ENCODE measurements at regions of chr3 and their contacts with region 1.

Region 1: DNA sequence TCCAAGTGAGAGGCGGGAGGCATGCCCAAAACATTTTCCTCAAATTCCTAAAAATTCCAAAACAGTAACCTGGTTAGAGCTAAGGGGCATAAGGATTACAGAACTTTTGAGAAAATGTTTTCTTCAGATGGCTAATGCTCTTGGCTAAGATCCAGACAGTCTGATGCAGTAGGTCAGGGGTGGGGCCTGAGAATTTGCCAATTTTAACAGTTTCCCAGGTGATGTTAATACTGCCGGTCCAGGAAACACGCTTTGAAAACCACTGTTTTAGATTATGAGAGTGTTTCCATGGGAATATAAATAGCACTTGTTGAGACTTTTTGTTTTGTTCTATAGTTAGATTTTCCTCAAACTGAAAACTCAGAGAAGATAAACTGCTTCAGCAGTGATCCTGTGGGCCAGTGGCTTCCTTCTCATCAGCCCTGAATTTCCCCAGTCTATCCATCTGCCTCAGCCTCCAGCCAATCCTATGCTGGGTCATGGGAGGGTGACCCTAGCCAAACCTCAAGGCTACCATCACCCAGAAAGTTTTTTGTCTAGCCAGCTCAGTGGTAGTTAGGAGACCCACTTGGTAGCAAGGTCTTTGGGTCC is 71.6 kb upstream of the ACP3 start:
- DNase-seq: peak; percentile 24
- ATAC-seq: no peak; the same call in 1 of the 2 replicates
- H3K4me3 ChIP-seq: no peak overlapping the region
- H3K27ac ChIP-seq: no peak overlapping the region
- H3K4me1 ChIP-seq: peaks cover 6% of the 10 kb centered on the region; the same call in 1 of the 2 replicates
- H3K27me3 ChIP-seq: no peaks in the 10 kb centered on the region
- CTCF ChIP-seq: no peak

Region 2: GRCh38 chr3:132154609-132155008 is 91.0 kb before region 1 on chr3:
- CTCF ChIA-PET with region 1: no interaction called
- POLR2A ChIA-PET with region 1: no interaction called
- intact Hi-C with region 1: no loop called
- DNase-seq: no peak
- ATAC-seq: no peak
- H3K4me3 ChIP-seq: no peak overlapping the region
- H3K27ac ChIP-seq: no peak overlapping the region
- H3K4me1 ChIP-seq: no peaks in the 10 kb centered on the region
- H3K27me3 ChIP-seq: no peaks in the 10 kb centered on the region
- CTCF ChIP-seq: no peak

Region 3: DNA sequence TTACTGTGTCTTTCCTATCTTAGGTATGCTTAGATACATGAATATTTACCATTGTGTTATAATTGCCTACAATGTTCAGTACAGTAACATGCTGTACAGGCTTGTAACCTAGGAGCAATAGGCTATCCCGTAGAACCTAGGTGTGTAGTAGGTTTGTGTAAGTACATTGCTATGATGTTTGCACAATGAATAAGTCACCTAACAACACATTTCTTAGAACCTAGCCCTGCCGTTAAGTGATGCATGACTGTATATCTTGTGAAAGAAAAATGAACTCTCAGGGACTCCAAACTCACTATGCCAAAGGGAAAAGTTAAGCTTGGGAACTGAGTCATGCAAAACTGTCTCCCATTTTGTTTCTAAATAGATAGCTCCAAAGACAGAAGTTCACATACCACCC is 20.0 kb before region 1 on chr3:
- CTCF ChIA-PET with region 1: no interaction called
- POLR2A ChIA-PET with region 1: no interaction called
- intact Hi-C with region 1: loop called (anchors 2 kb)
- DNase-seq: peak; percentile 89
- ATAC-seq: peak; percentile 99
- H3K4me3 ChIP-seq: no peak overlapping the region
- H3K27ac ChIP-seq: peak overlapping the region; percentile 91
- H3K4me1 ChIP-seq: peaks cover 11% of the 10 kb centered on the region
- H3K27me3 ChIP-seq: no peaks in the 10 kb centered on the region
- CTCF ChIP-seq: no peak

Region 4: GRCh38 chr3:132256989-132257388 is 11.3 kb after region 1 on chr3:
- CTCF ChIA-PET with region 1: no interaction called
- POLR2A ChIA-PET with region 1: no interaction called
- intact Hi-C with region 1: no loop called
- DNase-seq: peak; percentile 70
- ATAC-seq: peak; percentile 38
- H3K4me3 ChIP-seq: no peak overlapping the region
- H3K27ac ChIP-seq: no peak overlapping the region
- H3K4me1 ChIP-seq: peaks cover 28% of the 10 kb centered on the region
- H3K27me3 ChIP-seq: no peaks in the 10 kb centered on the region
- CTCF ChIP-seq: peak; percentile 75